ENCODE measurements at regions of chr2 and their contacts with region 1.

Region 1: DNA sequence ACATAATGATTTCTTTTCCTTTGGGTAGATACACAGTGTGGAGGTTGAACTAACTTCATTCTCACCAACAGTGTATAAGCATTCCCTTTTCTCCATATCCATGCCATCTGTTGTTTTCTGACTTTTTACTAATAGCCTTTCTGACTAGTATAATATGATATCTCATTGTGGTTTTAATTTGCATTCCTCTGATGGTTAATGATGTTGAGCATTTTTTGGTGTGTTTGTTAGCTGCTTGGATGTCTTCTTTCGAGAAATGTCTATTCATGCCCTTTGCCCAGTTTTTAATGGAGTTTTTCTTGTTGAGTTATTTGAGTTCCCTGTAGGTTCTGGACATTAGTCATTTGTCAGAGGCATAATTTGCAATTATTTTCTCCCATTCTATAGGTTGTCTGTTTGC is 59.8 kb downstream of the MARCHF4 start:
- DNase-seq: no peak
- ATAC-seq: no peak
- H3K4me3 ChIP-seq: no peak overlapping the region
- H3K4me3 Mint-ChIP-seq: no peak overlapping the region
- H3K27ac ChIP-seq: no peak overlapping the region
- H3K27ac Mint-ChIP-seq: no peak overlapping the region
- H3K4me1 ChIP-seq: no peaks in the 10 kb centered on the region
- H3K4me1 Mint-ChIP-seq: no peaks in the 10 kb centered on the region
- H3K27me3 ChIP-seq: no peaks in the 10 kb centered on the region
- H3K27me3 Mint-ChIP-seq: peaks cover 4% of the 10 kb centered on the region
- CTCF ChIP-seq: no peak

Region 2: DNA sequence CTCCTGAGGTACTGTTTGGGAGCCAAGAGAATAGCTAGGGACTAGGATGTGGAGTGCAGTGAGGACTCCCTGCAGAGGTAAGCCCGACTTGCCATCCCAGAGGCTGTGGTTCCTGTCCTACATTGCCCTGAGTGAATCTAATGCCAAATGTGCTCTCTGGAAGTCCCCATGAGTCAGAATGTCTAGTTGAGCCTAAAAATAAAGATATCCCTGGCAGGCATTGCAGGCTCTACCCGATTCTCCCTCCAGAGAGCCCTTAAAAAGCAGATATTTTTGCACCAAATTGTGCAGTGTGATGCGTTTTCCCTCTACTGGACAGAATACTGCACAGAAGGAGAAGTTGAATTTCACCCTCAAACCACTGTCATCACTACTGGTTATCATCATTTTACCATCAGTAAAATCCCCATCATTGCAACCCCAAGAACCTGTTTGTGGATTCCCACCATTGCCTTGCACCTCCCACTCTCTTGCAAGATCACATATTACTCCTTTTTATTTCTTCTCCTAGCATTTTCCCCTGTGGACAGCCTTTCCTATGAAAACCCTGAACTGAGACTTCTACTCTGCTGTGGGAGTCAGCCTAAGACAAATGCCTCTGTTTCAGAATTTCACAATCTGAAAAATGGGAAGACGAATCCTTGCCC is 38.1 kb before region 1 on chr2:
- CTCF ChIA-PET with region 1: no interaction called
- POLR2A ChIA-PET with region 1: no interaction called
- intact Hi-C with region 1: loop called in 1 of 2 experiments (anchors 2 kb)
- DNase-seq: no peak
- ATAC-seq: no peak
- H3K4me3 ChIP-seq: no peak overlapping the region
- H3K4me3 Mint-ChIP-seq: no peak overlapping the region
- H3K27ac ChIP-seq: no peak overlapping the region
- H3K27ac Mint-ChIP-seq: no peak overlapping the region
- H3K4me1 ChIP-seq: no peaks in the 10 kb centered on the region
- H3K4me1 Mint-ChIP-seq: no peaks in the 10 kb centered on the region
- H3K27me3 ChIP-seq: no peaks in the 10 kb centered on the region
- H3K27me3 Mint-ChIP-seq: peaks cover 3% of the 10 kb centered on the region
- CTCF ChIP-seq: no peak

Measured in CD8-positive, alpha-beta T cell (primary cell).